Left colon (tissue), 2 donors: ENCODE measurements at regions of chr17 and their contacts with region 1.

Region 1: DNA sequence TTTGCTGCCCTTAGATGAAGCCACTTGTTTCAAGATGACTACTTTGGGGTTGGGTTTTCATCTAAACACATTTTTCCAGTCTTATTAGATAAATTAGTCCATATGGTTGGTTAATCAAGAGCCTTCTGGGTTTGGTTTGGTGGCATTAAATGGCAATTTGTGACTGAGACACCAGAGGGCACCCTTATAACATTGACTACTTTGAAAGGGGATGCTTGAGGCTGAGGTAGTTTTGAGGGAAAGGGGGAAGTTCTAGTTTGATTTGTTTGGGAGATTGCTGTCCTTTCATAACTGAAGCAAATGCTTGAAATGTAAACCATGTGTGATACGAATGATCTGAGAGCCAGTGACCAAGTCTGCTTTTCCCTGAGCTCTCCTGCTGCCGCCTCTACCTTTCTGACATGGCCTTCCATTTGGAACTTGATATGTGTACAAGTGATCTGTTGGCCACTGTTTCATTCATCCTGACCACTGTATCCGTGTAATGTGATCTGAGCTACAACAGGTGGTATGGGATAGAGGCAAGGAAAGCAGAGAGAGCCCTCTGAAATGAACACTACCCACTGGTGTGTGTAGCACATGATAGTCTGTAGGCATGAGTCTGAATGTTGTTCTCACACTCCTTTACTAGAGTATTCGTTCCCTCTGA is 5.8 kb upstream of the RARA start:
- DNase-seq: peak; percentile 27 to 63
- ATAC-seq: peak; percentile 52

Region 2: DNA sequence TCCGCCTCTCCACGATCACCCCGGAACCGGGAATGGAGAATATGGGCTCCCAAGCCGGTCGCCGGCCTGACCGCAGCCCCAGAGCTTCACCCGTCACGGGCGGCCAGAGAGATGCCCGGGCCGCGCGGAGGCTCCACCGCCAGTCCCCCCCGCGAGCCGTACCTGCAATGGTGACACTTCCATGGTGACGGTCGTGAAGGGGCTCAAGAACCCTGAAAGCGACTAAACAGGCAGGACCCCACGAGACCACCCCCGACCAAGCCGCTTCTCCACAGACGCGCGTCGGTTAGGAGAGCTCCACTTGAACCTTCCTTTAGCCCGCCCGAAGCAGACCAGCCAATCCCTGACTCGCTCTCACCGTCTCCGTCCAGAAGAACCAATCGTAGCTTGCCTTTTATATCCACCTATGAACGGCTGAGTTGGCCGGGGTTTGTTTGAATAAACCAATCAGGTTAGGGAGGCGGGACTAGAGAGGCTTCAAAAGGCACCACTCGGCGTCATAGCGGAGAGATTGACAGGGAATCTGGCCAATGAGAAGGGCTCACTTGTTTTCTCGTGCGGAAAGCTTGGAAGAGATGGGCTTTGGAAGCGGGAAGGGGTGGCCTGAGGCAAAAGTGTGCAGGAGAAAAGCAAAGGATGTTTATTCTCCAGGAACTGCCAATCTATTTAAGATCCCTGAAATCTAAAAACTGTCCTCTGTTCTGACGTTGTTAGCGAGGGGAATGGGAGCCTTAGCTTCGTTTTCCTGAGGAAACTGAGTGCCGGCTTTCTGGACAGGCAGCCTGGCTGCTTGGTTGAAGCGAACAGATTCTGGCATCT is 114.7 kb after region 1 on chr17 and contains the start of gene TOP2A:
- intact Hi-C with region 1: loop called in 1 of 2 experiments (anchors 10 kb)
- DNase-seq: peak; percentile 94 to 99
- ATAC-seq: peak; percentile 97
- total RNA-seq, gene TOP2A: 10.9 to 30.3 TPM

Region 3: GRCh38 chr17:40430272-40431230 is 127.4 kb after region 1 on chr17:
- intact Hi-C with region 1: no loop called
- DNase-seq: no peak
- ATAC-seq: no peak